ENCODE measurements at regions of chr1 and their contacts with region 1.

Region 1: DNA sequence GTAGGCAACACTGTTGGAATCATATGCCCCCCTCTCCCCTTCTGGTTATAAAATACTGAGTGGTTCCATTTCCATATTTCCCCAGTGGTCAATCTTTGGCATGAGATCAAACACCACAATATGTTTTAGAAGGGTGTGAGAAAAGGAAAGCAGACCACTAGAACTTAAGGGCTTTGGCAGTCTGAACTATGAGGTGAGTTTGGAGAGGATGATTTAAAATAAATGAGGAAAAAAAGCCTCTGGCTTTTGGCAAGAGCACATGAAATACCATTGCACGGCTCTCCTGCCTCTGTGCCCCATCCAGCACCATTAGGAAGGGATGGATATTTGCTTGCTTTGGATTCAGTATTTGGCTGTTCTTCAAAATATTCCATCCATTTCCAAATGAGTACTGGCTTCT is 339.5 kb upstream of the C1orf87 start:
- DNase-seq: no peak
- H3K4me3 ChIP-seq: no peak overlapping the region
- H3K27ac ChIP-seq: no peak overlapping the region
- H3K4me1 ChIP-seq: no peaks in the 10 kb centered on the region
- H3K27me3 ChIP-seq: no peaks in the 10 kb centered on the region
- CTCF ChIP-seq: no peak

Region 2: DNA sequence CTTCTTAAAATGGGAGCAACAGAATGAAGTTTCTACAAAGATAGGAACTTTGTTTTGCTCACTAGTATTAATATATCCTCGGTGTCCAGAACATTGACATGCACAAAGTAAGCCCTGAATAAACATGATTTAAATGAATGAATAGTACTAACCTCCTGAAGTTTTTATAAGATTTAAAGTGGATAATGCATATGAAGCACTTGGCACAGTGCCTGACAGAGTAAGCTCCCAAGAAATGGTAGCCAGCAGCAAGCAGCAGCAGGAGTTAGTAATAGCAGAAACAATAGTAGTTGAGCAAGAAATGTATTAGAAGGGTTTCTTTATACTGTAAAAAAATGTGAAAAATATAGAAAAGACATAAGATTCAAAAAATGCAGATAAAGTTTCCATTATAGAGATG is 81.4 kb before region 1 on chr1:
- dilution Hi-C with region 1: no loop called
- DNase-seq: no peak
- H3K4me3 ChIP-seq: no peak overlapping the region
- H3K27ac ChIP-seq: no peak overlapping the region
- H3K4me1 ChIP-seq: no peaks in the 10 kb centered on the region
- H3K27me3 ChIP-seq: no peaks in the 10 kb centered on the region
- CTCF ChIP-seq: no peak

Region 3: GRCh38 chr1:60488847-60489246 is 75.8 kb after region 1 on chr1:
- dilution Hi-C with region 1: loop called (anchors 10 kb)
- DNase-seq: no peak
- H3K4me3 ChIP-seq: no peak overlapping the region
- H3K27ac ChIP-seq: no peak overlapping the region
- H3K4me1 ChIP-seq: no peaks in the 10 kb centered on the region
- H3K27me3 ChIP-seq: no peaks in the 10 kb centered on the region
- CTCF ChIP-seq: no peak